CD4-positive, alpha-beta memory T cell (primary cell): ENCODE measurements at regions of chr7 and their contacts with region 1.

Region 1: DNA sequence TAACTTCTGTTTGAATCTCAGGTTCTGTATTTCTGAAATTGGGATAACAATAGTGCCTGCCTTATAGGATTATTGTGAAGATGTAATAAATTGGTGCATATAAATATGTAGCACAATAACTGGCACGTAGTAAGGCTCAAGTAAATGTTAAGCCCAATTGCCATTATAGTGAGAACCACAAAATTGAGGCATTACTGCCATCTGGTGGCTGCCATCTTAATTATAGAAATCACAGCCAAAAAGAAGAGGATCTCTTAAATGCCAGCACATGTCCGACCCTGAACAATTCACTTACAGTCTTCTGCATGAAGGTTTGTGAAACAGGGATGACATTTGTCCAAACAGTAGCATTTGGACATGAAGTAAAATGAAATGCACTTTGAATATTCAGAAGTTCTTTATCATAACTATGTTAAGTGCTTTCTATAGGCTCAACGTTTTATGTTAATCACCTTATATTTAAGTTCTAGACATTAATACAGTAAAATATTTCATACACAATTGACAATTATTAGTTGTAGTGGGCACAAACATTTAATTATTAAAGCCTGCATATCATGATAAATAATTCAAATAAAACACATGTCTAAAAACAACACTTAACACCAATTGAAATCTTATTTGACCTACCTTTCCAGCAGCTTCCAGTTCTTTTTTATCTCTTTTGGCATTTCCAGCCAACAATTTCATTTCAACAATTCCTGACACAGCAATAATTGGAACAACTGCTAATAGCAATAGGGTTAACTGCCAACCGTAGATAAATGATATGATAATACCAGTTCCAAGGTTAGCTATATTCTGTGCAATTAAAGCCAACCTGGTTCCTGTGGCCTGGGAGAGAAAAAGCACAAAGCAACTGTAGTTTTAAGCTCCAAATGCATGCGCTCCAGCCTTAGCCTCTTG is 58.5 kb downstream of the ABCB4 start:
- DNase-seq: peak; percentile 62 to 72 (median 68)
- H3K4me3 ChIP-seq: no peak overlapping the region
- H3K4me3 Mint-ChIP-seq: no peak overlapping the region
- H3K27ac ChIP-seq: no peak overlapping the region
- H3K27ac Mint-ChIP-seq: no peak overlapping the region
- H3K4me1 ChIP-seq: no peaks in the 10 kb centered on the region
- H3K4me1 Mint-ChIP-seq: peaks cover 0 to 3% (median 0%) of the 10 kb centered on the region in 4 donors
- H3K27me3 ChIP-seq: no peaks in the 10 kb centered on the region
- H3K27me3 Mint-ChIP-seq: peaks cover 2 to 3% of the 10 kb centered on the region in 2 donors

Region 2: DNA sequence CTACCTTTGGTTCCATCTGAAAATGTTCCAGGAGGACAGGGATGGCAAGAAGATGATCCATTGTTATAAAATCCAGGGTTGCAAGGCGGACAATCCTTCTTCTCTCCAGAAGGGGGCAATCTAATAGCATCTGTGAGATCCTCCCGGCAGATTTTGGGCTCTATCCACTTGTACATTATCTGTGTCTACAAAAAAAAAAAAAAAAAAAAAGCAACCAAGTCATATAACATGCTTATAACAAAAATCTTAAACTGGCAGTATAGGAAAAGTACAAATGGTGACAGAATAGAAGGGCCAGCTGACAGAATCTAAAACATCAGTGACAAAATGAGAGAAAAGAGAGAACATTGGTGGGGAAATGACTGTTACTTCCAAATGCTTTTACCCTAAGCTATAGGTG is 490.2 kb before region 1 on chr7:
- CTCF ChIA-PET with region 1: interaction called, 3 read pairs
- POLR2A ChIA-PET with region 1: no interaction called
- intact Hi-C with region 1: loop called (anchors 1 kb)
- DNase-seq: peak in 4 of 5 donors; percentile 39 to 60 (median 53)
- H3K4me3 ChIP-seq: no peak overlapping the region
- H3K4me3 Mint-ChIP-seq: no peak overlapping the region
- H3K27ac ChIP-seq: no peak overlapping the region
- H3K27ac Mint-ChIP-seq: peak overlapping the region in 1 of 7 donors; percentile 63
- H3K4me1 ChIP-seq: no peaks in the 10 kb centered on the region
- H3K4me1 Mint-ChIP-seq: no peaks in the 10 kb centered on the region
- H3K27me3 ChIP-seq: no peaks in the 10 kb centered on the region
- H3K27me3 Mint-ChIP-seq: peaks cover 0 to 3% of the 10 kb centered on the region in 2 donors

Region 3: GRCh38 chr7:87312215-87312865 is 104.6 kb before region 1 on chr7:
- CTCF ChIA-PET with region 1: interaction called, 362 read pairs
- POLR2A ChIA-PET with region 1: no interaction called
- intact Hi-C with region 1: loop called (anchors 1 kb)
- DNase-seq: peak; percentile 52 to 68 (median 62)
- H3K4me3 ChIP-seq: no peak overlapping the region
- H3K4me3 Mint-ChIP-seq: no peak overlapping the region
- H3K27ac ChIP-seq: no peak overlapping the region
- H3K27ac Mint-ChIP-seq: peak overlapping the region in 1 of 7 donors; percentile 27
- H3K4me1 ChIP-seq: peaks cover 6% of the 10 kb centered on the region
- H3K4me1 Mint-ChIP-seq: peaks cover 3 to 7% (median 5%) of the 10 kb centered on the region in 4 donors
- H3K27me3 ChIP-seq: no peaks in the 10 kb centered on the region
- H3K27me3 Mint-ChIP-seq: peaks cover 0 to 3% of the 10 kb centered on the region in 2 donors

Region 4: DNA sequence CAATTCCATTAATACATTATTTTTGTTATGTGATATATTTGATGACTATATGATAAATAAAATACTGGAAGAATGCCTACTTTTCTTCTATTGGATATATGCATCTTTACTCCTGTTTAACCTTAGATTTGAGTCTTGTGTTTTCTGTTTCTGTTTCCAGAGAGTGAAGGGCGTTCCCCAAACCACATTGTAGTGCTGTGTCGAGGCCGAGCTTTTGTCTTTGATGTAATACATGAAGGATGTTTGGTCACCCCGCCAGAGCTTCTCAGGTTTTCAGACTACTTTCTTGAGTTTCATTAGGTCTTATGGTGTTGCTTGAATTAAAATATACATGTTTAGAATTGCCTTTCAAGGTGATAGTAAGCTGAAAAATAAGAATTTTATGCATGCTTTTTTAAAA is 47.7 kb before region 1 on chr7:
- CTCF ChIA-PET with region 1: interaction called, 4 read pairs
- POLR2A ChIA-PET with region 1: no interaction called
- intact Hi-C with region 1: loop called (anchors 2 kb)
- DNase-seq: peak; percentile 45 to 64 (median 49)
- H3K4me3 ChIP-seq: no peak overlapping the region
- H3K4me3 Mint-ChIP-seq: peak overlapping the region in 5 of 8 donors; percentile 25 to 76 (median 35)
- H3K27ac ChIP-seq: no peak overlapping the region
- H3K27ac Mint-ChIP-seq: peak overlapping the region in 5 of 7 donors; percentile 15 to 94 (median 81)
- H3K4me1 ChIP-seq: peaks cover 18% of the 10 kb centered on the region
- H3K4me1 Mint-ChIP-seq: peaks cover 0 to 8% (median 3%) of the 10 kb centered on the region in 4 donors
- H3K27me3 ChIP-seq: no peaks in the 10 kb centered on the region
- H3K27me3 Mint-ChIP-seq: no peaks in the 10 kb centered on the region

Region 5: GRCh38 chr7:87886875-87887274 is 469.9 kb after region 1 on chr7:
- CTCF ChIA-PET with region 1: interaction called, 11 read pairs
- POLR2A ChIA-PET with region 1: no interaction called
- intact Hi-C with region 1: loop called (anchors 1 kb)
- DNase-seq: peak in 4 of 5 donors; percentile 41 to 50 (median 44)
- H3K4me3 ChIP-seq: no peak overlapping the region
- H3K4me3 Mint-ChIP-seq: no peak overlapping the region
- H3K27ac ChIP-seq: no peak overlapping the region
- H3K27ac Mint-ChIP-seq: no peak overlapping the region
- H3K4me1 ChIP-seq: no peaks in the 10 kb centered on the region
- H3K4me1 Mint-ChIP-seq: peaks cover 0 to 14% (median 11%) of the 10 kb centered on the region in 4 donors
- H3K27me3 ChIP-seq: no peaks in the 10 kb centered on the region
- H3K27me3 Mint-ChIP-seq: no peaks in the 10 kb centered on the region